Lower leg skin (tissue), 4 donors: ENCODE measurements at regions of chr1 and their contacts with region 1.

Region 1: DNA sequence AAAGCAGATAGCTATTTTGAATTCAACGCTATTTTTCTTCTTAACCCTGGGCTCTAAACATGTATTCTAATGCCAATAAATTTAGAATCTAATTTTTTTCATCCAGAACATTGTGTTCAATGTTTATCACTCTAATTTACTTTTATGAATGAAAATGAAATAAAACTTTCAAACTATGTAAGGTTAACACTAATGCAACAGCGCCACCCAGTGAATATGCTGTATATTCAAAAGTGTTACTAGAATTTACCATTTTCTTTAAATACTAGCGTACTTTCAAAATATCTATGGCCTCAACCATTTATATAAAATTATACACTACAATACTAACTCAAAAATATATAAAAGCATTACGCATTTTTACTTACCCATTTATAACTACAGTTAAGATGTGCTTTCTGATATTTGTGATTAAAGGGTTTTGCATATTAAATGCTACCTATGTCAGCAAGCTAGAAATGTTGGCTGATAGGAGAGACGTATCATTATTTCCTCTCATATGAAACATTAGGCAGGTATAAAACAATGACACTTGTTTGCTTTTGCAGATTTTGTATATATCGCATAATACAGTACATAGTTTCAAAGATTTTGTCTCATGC is 5.9 kb upstream of the NUF2 start:
- DNase-seq: no peak
- H3K4me3 ChIP-seq: no peak overlapping the region
- CTCF ChIP-seq: peak in 1 of 3 donors; percentile 14
- POLR2A ChIP-seq: no peak

Region 2: DNA sequence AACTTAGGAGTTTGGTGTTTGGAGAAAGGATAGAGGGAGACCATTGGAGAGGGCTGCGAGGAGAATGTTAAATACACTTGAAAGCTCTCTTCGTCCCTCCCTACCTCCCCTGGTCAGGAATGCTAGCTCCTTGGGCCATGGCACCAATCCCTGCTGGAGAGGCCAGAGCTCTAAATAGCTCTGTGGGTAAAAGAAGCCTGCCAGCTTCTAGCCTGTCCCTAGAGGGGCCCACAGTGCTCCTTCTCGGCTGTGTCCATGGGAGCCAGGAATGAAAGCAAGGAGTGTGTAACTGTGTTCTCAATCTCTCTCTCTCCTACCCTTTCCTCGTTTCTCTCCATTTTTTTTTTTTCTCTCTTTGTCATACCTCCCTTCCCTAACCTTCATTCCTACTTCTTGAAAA is 454.8 kb before region 1 on chr1 and contains the start of gene CCDC190:
- intact Hi-C with region 1: loop called (anchors 10 kb)
- DNase-seq: no peak
- H3K4me3 ChIP-seq: no peak within 1 kb of the TSS
- CTCF ChIP-seq: no peak
- POLR2A ChIP-seq: no peak
- total RNA-seq, gene CCDC190: not detected

Region 3: DNA sequence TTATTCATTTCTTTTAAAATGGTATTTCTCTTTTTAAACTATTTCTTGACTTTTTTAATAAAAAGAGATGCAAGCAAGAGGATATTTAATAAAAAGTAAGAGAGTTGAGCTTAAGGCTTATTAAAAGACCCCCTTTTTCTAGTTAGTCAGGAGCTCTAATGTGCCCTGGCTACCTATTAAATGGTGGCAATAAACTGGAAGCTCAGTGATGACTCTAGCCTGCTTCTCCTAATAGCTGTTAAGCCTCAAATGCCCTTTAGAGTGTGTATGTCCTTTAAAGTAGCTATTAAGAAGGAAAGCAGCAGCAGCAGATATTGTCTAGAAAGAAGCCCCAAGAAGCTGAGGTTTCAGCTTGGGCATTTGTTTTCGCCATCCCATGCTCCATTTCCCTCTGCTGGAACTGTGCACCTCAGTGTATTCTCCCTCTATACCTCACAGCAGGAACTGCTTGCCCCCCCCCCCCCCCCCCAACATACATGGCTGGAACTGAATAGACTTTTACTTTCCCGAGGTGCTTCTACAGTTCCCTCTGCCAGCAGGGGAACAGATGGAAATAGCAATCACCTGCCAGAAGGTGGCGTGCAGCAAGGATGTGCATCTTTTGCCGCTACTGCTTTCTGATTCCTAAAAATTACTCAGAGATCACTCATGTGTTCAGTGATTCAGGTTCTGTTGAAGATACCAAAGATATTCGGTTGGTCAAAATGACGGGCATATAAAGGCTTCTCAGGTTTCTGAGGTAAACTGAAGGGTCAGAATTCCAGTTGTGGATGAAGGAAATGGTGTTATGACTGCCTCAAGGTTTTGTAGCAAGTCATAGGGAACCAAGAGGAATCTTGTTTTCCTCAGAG is 244.2 kb before region 1 on chr1:
- intact Hi-C with region 1: loop called (anchors 10 kb)
- DNase-seq: peak; percentile 22 to 83
- H3K4me3 ChIP-seq: no peak overlapping the region
- CTCF ChIP-seq: no peak
- POLR2A ChIP-seq: no peak

Region 4: GRCh38 chr1:163205513-163205912 is 110.4 kb before region 1 on chr1:
- intact Hi-C with region 1: no loop called
- DNase-seq: no peak
- H3K4me3 ChIP-seq: no peak overlapping the region
- CTCF ChIP-seq: no peak
- POLR2A ChIP-seq: no peak